ENCODE measurements at regions of chr10 and their contacts with region 1.

Region 1: GRCh38 chr10:34815185-34816084 is at the start of gene PARD3:
- DNase-seq: no peak
- H3K4me3 ChIP-seq: peak within 1 kb of the TSS; percentile 67 to 95 (median 83)
- H3K27ac ChIP-seq: peak within 1 kb of the TSS; percentile 89 to 96 (median 95)
- H3K4me1 ChIP-seq: peaks cover 0 to 55% (median 17%) of the 10 kb centered on the region in 3 donors
- H3K27me3 ChIP-seq: peaks cover 0 to 10% (median 0%) of the 10 kb centered on the region in 4 donors
- CTCF ChIP-seq: no peak
- POLR2A ChIP-seq: no peak
- total RNA-seq, gene PARD3: 57.3 to 114 (median 81.7) TPM

Region 2: DNA sequence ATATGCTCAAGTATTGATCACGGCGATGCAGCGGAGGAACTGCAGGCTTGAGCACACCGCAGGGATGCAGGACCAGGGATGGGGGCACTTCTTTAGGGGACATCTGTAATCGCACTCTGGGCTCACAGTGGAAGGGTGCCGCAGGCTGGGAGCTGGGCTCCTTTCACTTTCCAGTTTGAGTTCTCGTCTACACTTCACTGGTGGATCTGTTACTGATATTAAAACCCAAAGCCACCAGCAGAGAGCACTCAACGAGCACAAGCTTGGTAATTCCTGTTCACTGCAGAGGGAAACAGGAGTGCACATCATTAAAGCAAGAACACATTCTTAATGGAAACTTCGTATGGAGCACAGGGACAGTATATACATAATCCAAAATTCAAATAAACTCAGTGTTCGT is 91.7 kb before region 1 on chr10:
- intact Hi-C with region 1: loop called (anchors 10 kb)
- DNase-seq: no peak
- H3K4me3 ChIP-seq: peak overlapping the region in 1 of 4 donors; percentile 27
- H3K27ac ChIP-seq: peak overlapping the region in 3 of 4 donors; percentile 36 to 51 (median 39)
- H3K4me1 ChIP-seq: peaks cover 21 to 100% (median 42%) of the 10 kb centered on the region in 3 donors
- H3K27me3 ChIP-seq: no peaks in the 10 kb centered on the region
- CTCF ChIP-seq: peak in 5 of 6 experiments; percentile 45 to 75 (median 58)
- POLR2A ChIP-seq: no peak

Region 3: DNA sequence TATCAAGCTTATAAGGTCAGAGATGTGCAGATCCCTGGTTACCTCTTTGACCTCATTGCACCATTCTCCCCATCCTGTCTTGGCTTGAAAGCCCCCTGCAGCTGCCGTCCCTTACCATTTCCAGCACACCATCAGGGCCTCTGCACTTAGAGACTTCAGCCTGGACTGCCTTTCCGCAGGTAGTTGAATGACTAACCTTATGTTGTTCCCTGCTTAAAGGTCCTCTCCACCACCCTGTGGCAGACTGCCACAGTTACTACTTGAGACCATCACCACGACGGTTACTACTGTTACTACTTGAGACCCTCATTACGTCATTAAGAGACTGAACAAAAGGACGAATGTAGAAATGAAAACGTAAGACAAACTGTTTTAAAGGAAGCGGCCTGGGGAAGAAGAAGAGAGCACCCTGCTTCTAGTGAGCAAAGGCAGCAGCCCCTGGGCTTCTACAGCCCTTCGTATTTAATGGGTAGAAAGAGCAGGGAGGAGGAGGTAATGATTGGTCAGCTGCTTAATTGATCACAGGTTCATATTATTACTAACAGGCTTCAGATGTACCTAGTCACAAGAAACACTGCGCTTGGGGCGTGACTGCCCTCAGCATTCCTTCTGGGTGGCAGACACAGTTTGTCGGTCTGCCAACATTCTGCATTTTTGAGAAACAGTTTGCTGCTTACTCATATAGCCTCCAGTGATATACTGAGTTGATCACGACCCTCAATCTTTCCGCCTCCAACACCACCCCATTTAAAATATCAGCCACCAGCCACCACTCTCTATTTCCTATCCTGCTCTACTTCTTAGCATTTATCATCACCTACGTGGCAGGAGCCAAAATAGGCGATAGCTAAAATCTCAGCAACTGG is 73.8 kb after region 1 on chr10:
- intact Hi-C with region 1: no loop called
- DNase-seq: no peak
- H3K4me3 ChIP-seq: no peak overlapping the region
- H3K27ac ChIP-seq: peak overlapping the region in 3 of 4 donors; percentile 11 to 47 (median 13)
- H3K4me1 ChIP-seq: peaks cover 0 to 44% (median 6%) of the 10 kb centered on the region in 3 donors
- H3K27me3 ChIP-seq: no peaks in the 10 kb centered on the region
- CTCF ChIP-seq: no peak
- POLR2A ChIP-seq: no peak

Region 4: DNA sequence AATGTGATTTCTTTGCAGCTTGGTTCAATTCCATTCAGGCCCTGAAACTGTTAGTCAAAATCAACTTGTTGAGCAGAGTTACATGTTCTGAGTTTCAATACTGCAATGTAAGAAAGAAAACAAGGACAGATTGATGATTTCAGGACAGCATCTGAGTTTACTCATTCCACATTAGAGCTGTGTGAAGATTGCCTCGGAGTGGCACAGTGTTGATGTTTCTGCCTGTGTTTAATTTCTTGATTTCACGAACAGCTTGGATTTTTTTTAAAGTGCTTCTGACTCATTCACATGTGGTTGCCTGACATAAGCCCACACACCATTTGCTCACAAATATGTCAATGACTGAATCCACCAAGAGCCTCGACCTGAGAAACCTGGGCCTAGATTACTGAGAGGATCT is 100.9 kb after region 1 on chr10:
- intact Hi-C with region 1: no loop called
- DNase-seq: no peak
- H3K4me3 ChIP-seq: no peak overlapping the region
- H3K27ac ChIP-seq: peak overlapping the region in 1 of 4 donors; percentile 50
- H3K4me1 ChIP-seq: peaks cover 0 to 9% (median 0%) of the 10 kb centered on the region in 3 donors
- H3K27me3 ChIP-seq: no peaks in the 10 kb centered on the region
- CTCF ChIP-seq: no peak
- POLR2A ChIP-seq: no peak

Measured in esophagus squamous epithelium (tissue), 5 donors.